ENCODE measurements at regions of chr5 and their contacts with region 1.

Region 1: GRCh38 chr5:139690064-139690802 is 42.1 kb downstream of the CXXC5 start:
- DNase-seq: peak; percentile 38
- ATAC-seq: peak; percentile 57
- H3K4me3 Mint-ChIP-seq: no peak overlapping the region
- H3K27ac Mint-ChIP-seq: no peak overlapping the region
- H3K4me1 Mint-ChIP-seq: no peaks in the 10 kb centered on the region
- H3K27me3 Mint-ChIP-seq: no peaks in the 10 kb centered on the region

Region 2: DNA sequence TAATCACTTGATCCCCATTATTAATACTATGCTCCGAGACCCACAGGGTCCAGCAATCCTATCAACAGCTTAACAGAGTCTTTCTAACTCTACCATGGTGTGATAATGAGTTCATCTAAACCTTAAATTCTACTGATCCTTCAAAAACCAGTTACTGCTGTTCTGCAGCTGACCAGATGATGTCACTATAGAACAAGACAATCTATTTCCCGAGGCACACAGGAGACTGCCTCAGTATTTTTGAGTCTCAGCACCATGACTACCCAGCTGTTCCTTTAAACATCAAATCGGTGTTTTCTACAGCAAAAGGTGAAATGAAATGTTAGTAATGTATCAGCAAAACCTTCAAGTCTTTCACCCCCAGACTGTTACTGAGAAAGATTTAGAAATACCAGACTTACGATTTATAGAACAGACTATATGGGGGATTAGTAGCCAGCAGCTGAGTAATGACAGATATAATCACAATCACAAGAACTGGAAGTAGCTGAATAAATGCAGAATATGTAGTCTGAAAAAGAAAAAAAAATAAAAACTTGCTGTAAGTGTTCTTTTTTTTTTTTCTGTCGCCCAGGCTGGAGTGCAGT is 267.8 kb before region 1 on chr5:
- CTCF ChIA-PET with region 1: no interaction called
- POLR2A ChIA-PET with region 1: no interaction called
- intact Hi-C with region 1: loop called in 1 of 2 experiments (anchors 5 kb)
- DNase-seq: peak; percentile 66
- ATAC-seq: peak; percentile 93
- H3K4me3 Mint-ChIP-seq: no peak overlapping the region
- H3K27ac Mint-ChIP-seq: no peak overlapping the region
- H3K4me1 Mint-ChIP-seq: peaks cover 5% of the 10 kb centered on the region
- H3K27me3 Mint-ChIP-seq: no peaks in the 10 kb centered on the region

Region 3: DNA sequence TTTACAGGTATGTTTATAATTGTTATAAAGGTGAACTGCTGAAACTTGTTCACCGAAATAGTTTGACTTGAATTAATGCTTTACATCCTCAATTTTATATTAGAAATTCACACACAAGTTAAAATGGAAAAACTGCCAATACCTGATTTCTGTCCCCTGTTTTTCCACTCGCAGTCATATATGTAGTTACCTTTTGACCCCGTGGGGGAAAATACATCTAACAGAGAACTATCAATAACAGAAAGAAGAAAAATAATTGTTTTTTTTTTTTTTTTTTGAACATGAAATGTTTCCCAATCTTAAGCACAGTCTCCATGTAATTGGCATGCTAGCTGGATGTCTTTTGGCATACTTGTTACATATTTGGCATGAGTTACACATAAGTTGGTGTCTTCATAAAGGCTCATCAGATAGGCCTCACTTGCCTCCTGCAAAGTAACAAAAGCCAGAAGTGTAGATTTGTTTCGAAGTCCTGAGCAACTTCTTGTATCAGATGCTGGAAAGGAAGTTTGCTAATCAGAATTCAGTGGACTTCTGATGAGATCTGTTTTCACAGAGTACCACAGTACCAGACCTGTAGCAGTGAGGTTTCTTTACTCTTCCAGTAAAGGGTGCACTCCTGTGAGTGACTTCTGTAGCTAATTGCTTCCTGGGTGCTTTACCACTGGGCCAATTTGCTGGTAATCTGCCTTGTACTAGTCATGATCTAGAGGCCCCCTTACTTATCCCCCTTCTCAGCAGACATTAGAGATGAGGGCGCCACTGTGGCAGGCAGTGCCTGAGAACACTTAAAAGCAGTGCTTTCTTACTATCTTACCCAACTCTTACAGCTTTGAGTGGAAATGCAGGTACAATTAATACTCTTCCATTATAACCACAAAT is 78.3 kb before region 1 on chr5:
- CTCF ChIA-PET with region 1: no interaction called
- POLR2A ChIA-PET with region 1: no interaction called
- intact Hi-C with region 1: no loop called
- DNase-seq: peak; percentile 41
- ATAC-seq: peak; percentile 90
- H3K4me3 Mint-ChIP-seq: no peak overlapping the region
- H3K27ac Mint-ChIP-seq: peak overlapping the region; percentile 48
- H3K4me1 Mint-ChIP-seq: peaks cover 24% of the 10 kb centered on the region
- H3K27me3 Mint-ChIP-seq: no peaks in the 10 kb centered on the region

Region 4: DNA sequence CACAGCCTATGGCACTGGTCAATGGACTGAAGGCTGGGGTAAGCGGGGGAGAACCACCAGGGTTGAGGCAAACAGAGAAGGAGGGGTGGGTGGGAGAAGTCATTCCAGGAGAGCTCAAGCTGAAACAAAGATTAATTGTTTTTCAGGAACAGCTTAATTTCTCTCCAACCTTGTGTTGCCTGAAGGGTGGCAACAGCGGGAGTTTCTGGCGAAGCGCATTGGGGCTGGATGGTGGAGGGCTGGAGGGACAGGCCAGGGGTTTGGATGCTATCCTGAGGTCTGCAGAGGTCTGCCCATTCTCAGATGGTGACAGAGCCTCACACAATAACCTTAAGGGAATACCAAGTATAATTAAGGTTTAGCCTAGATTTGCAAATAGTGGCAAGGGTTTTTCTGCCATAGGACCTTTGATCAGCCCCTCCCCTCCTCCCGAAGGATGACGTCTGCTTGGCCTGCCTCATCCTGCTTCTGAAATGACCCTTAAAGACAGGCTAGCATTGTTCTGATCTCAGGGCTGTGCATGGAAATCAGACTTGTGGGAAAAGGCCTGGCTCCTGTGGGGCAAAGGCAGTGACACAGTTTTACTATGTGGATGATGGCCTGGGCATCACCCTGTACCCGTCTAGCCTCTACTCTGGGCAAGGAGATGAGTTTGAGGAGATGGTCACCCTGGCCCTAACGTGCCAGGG is 138.1 kb after region 1 on chr5:
- CTCF ChIA-PET with region 1: no interaction called
- POLR2A ChIA-PET with region 1: no interaction called
- intact Hi-C with region 1: no loop called
- DNase-seq: no peak
- ATAC-seq: no peak
- H3K4me3 Mint-ChIP-seq: no peak overlapping the region
- H3K27ac Mint-ChIP-seq: no peak overlapping the region
- H3K4me1 Mint-ChIP-seq: no peaks in the 10 kb centered on the region
- H3K27me3 Mint-ChIP-seq: peaks cover 4% of the 10 kb centered on the region

Measured in activated CD4-positive, alpha-beta T cell treated with anti-CD3 and anti-CD28 coated beads for 36 hours (primary cell).